H1 (cell line): ENCODE measurements at regions of chr7 and their contacts with region 1.

Region 1: DNA sequence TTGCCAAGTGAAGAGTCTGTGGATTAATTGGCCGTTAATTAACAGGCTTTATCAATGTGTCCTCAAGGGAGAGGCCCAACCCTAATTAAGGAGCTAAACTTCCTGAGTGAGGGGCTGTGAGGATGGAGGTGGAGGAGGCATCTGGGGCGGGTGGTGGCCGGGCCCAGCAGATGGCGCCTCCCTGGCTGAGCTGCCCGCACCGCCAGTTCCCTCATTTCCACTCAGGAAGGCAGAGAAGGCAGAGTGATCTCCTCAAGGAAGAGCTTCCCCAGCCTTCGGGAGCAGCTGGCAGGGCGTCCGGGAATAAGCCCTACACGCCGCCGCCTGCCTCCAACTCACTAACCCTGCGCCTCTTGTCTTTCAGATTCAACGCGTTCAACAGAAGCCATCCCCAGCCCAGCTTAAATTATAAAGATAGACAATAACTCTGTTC is 112.2 kb downstream of the CYTH3 start:
- DNase-seq: peak in 1 of 2 experiments; percentile 60
- H3K4me3 ChIP-seq: no peak overlapping the region
- H3K27ac ChIP-seq: no peak overlapping the region
- H3K4me1 ChIP-seq: peaks cover 0 to 2% (median under 1%) of the 10 kb centered on the region in 4 experiments; a peak in 1 of 7 replicates
- H3K27me3 ChIP-seq: no peaks in the 10 kb centered on the region
- CTCF ChIP-seq: peak; percentile 70 to 74 (median 73)
- EP300 ChIP-seq: no peak
- POLR2A ChIP-seq: no peak
- RAD21 ChIP-seq: peak; percentile 64 to 72

Region 2: DNA sequence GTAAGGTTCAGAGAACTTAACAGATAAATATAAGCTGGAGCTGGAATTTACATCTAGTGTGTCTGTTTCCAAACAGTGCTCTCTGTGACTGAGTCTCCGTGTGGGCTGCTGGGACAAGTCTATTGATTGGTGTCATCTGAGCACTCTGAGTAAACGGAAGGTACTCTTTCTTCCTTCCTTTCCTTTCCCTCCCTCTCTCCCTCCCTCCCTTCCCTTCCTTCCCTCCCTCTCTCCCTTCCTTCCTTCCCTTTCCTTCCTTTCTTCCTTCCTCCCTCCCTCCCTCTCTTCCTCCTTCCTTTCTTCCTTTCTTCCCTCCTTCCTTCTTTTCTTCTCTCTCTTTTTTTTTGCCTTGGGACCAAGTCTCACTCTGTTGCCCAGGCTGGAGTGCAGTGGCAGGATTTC is 67.3 kb before region 1 on chr7:
- CTCF ChIA-PET with region 1: no interaction called
- POLR2A ChIA-PET with region 1: no interaction called
- DNase-seq: no peak
- H3K4me3 ChIP-seq: no peak overlapping the region
- H3K27ac ChIP-seq: no peak overlapping the region
- H3K4me1 ChIP-seq: no peaks in the 10 kb centered on the region
- H3K27me3 ChIP-seq: no peaks in the 10 kb centered on the region; a peak in 1 of 7 replicates
- CTCF ChIP-seq: no peak
- EP300 ChIP-seq: no peak
- POLR2A ChIP-seq: no peak
- RAD21 ChIP-seq: no peak

Region 3: GRCh38 chr7:6172224-6172923 is 12.2 kb after region 1 on chr7:
- CTCF ChIA-PET with region 1: interaction called, 18 read pairs
- POLR2A ChIA-PET with region 1: no interaction called
- DNase-seq: no peak
- H3K4me3 ChIP-seq: peak overlapping the region in 1 of 4 experiments; percentile 9; a peak in 1 of 8 replicates
- H3K27ac ChIP-seq: peak overlapping the region; percentile 28; the same call in 1 of the 2 replicates
- H3K4me1 ChIP-seq: peaks cover 0 to 19% (median 12%) of the 10 kb centered on the region in 4 experiments; a peak in 5 of 7 replicates
- H3K27me3 ChIP-seq: no peaks in the 10 kb centered on the region
- CTCF ChIP-seq: no peak; a peak in 1 of 4 replicates
- EP300 ChIP-seq: no peak
- POLR2A ChIP-seq: no peak
- RAD21 ChIP-seq: no peak

Region 4: DNA sequence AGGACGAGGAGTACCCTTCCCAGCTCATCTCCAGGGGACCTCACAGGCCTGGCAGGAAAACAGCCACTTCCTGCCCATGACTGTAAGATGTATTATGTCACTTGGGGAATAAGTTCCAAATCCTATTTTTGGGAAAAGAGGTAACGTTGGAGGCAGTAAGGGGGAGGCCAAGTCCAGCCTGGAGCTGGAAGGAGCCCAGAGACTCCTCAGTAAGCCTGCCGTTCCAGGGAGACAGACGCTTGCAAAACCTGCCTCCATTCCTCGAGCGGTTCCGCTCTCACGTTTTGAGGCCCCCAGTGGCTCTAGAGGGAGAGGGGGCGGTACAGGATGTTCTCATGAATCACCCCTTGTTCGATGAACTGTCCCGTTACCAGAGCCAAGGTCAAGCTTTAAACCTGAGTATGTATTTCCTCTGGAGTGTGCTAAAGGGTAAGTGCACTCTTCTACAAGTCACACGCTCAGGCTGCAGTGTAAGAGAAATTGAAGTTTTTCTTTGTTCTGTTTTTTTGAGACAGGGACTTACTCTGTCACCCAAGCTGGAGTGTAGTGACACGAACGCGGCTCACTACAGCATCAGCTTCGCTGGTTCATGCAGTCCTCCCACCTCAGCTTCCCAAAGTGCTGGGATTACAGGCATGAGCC is 157.7 kb after region 1 on chr7:
- CTCF ChIA-PET with region 1: interaction called, 103 read pairs
- POLR2A ChIA-PET with region 1: no interaction called
- DNase-seq: no peak
- H3K4me3 ChIP-seq: no peak overlapping the region
- H3K27ac ChIP-seq: no peak overlapping the region
- H3K4me1 ChIP-seq: peaks cover 0 to 3% (median 1%) of the 10 kb centered on the region in 4 experiments; a peak in 1 of 7 replicates
- H3K27me3 ChIP-seq: no peaks in the 10 kb centered on the region
- CTCF ChIP-seq: no peak
- EP300 ChIP-seq: no peak
- POLR2A ChIP-seq: no peak
- RAD21 ChIP-seq: no peak